Panc1 (cell line): ENCODE measurements at regions of chr7 and their contacts with region 1.

Region 1: GRCh38 chr7:30824821-30825720 is 53.9 kb downstream of the MINDY4 start:
- DNase-seq: no peak
- ATAC-seq: no peak
- H3K4me3 ChIP-seq: no peak overlapping the region
- H3K27ac ChIP-seq: no peak overlapping the region
- H3K4me1 ChIP-seq: no peaks in the 10 kb centered on the region
- H3K27me3 ChIP-seq: no peaks in the 10 kb centered on the region
- CTCF ChIP-seq: no peak

Region 2: GRCh38 chr7:30908681-30909080 is 83.6 kb after region 1 on chr7:
- CTCF ChIA-PET with region 1: interaction called, 15 read pairs
- POLR2A ChIA-PET with region 1: no interaction called
- in situ Hi-C with region 1: no loop called
- intact Hi-C with region 1: no loop called
- DNase-seq: no peak
- ATAC-seq: no peak
- H3K4me3 ChIP-seq: no peak overlapping the region
- H3K27ac ChIP-seq: no peak overlapping the region
- H3K4me1 ChIP-seq: no peaks in the 10 kb centered on the region
- H3K27me3 ChIP-seq: no peaks in the 10 kb centered on the region
- CTCF ChIP-seq: no peak